ENCODE measurements at regions of chr3 and their contacts with region 1.

Region 1: GRCh38 chr3:108221911-108222852 is at the start of gene IFT57:
- DNase-seq: peak; percentile 86 to 99 (median 94)
- ATAC-seq: peak; percentile 92
- H3K4me3 ChIP-seq: peak within 1 kb of the TSS; percentile 94
- H3K4me3 Mint-ChIP-seq: peak within 1 kb of the TSS; percentile 91
- H3K27ac ChIP-seq: peak within 1 kb of the TSS; percentile 77 to 96
- H3K27ac Mint-ChIP-seq: peak within 1 kb of the TSS; percentile 98
- H3K4me1 ChIP-seq: peaks cover 16% of the 10 kb centered on the region
- H3K4me1 Mint-ChIP-seq: peaks cover 62% of the 10 kb centered on the region
- H3K27me3 ChIP-seq: no peaks in the 10 kb centered on the region
- H3K27me3 Mint-ChIP-seq: no peaks in the 10 kb centered on the region
- CTCF ChIP-seq: no peak
- total RNA-seq, gene IFT57: 56.6 to 58.6 TPM

Region 2: GRCh38 chr3:107927361-107928083 is 294.7 kb before region 1 on chr3:
- CTCF ChIA-PET with region 1: interaction called, 3 read pairs
- POLR2A ChIA-PET with region 1: interaction called, 12 read pairs
- intact Hi-C with region 1: loop called (anchors 10 kb)
- DNase-seq: peak; percentile 37 to 83 (median 56)
- ATAC-seq: peak; percentile 90
- H3K4me3 ChIP-seq: peak overlapping the region; percentile 68
- H3K4me3 Mint-ChIP-seq: peak overlapping the region; percentile 91
- H3K27ac ChIP-seq: no peak overlapping the region
- H3K27ac Mint-ChIP-seq: no peak overlapping the region
- H3K4me1 ChIP-seq: peaks cover 16% of the 10 kb centered on the region
- H3K4me1 Mint-ChIP-seq: peaks cover 14% of the 10 kb centered on the region
- H3K27me3 ChIP-seq: peaks cover 0 to 6% of the 10 kb centered on the region in 2 experiments
- H3K27me3 Mint-ChIP-seq: peaks cover 4% of the 10 kb centered on the region
- CTCF ChIP-seq: peak; percentile 94

Region 3: GRCh38 chr3:108036984-108037741 is 185.0 kb before region 1 on chr3:
- CTCF ChIA-PET with region 1: no interaction called
- POLR2A ChIA-PET with region 1: no interaction called
- intact Hi-C with region 1: no loop called
- DNase-seq: peak in 1 of 14 experiments; percentile 13
- ATAC-seq: no peak
- H3K4me3 ChIP-seq: no peak overlapping the region
- H3K4me3 Mint-ChIP-seq: no peak overlapping the region
- H3K27ac ChIP-seq: no peak overlapping the region
- H3K27ac Mint-ChIP-seq: peak overlapping the region; percentile 72
- H3K4me1 ChIP-seq: no peaks in the 10 kb centered on the region
- H3K4me1 Mint-ChIP-seq: peaks cover 21% of the 10 kb centered on the region
- H3K27me3 ChIP-seq: no peaks in the 10 kb centered on the region
- H3K27me3 Mint-ChIP-seq: no peaks in the 10 kb centered on the region
- CTCF ChIP-seq: no peak

Region 4: DNA sequence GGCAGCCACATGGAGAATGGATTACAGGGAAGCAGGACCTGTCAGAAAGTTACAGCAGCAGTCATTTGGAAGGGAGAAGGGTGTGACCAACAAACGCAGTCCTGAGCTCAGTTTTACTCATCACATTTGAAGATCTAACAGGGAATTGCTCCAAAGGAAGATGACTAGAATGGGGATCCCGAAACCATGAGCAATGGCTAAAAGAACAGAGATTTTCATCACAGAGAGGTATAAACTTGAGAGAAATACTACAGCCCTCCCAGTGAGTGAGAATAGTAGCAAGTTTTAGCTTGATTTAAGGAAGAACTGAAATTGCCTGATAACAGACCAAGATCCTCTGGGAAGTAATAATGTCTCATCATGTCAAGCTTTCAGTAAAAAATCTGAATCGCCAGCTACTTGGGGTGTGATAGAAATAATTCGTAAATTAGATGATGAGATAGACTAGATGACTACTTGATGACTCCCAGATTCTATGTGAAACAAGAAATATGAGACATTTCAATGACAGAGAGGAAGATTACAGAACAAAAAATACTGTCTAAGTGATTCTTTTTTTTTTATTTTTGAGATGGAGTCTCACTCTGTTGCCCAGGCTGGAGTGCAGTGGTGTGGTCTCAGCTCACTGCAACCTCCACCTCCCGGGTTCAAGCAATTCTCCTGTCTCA is 148.3 kb before region 1 on chr3:
- CTCF ChIA-PET with region 1: no interaction called
- POLR2A ChIA-PET with region 1: interaction called, 17 read pairs
- intact Hi-C with region 1: loop called in 1 of 2 experiments (anchors 5 kb)
- DNase-seq: no peak
- ATAC-seq: no peak
- H3K4me3 ChIP-seq: no peak overlapping the region
- H3K4me3 Mint-ChIP-seq: peak overlapping the region; percentile 39
- H3K27ac ChIP-seq: no peak overlapping the region
- H3K27ac Mint-ChIP-seq: peak overlapping the region; percentile 23
- H3K4me1 ChIP-seq: peaks cover 15% of the 10 kb centered on the region
- H3K4me1 Mint-ChIP-seq: peaks cover 93% of the 10 kb centered on the region
- H3K27me3 ChIP-seq: no peaks in the 10 kb centered on the region
- H3K27me3 Mint-ChIP-seq: no peaks in the 10 kb centered on the region
- CTCF ChIP-seq: no peak

Region 5: GRCh38 chr3:108090701-108091451 is 131.3 kb before region 1 on chr3 and contains the start of gene CD47:
- CTCF ChIA-PET with region 1: no interaction called
- POLR2A ChIA-PET with region 1: interaction called, 88 read pairs
- intact Hi-C with region 1: loop called (anchors 1 to 2 kb)
- DNase-seq: peak; percentile 94 to 98 (median 98)
- ATAC-seq: peak; percentile 74
- H3K4me3 ChIP-seq: peak within 1 kb of the TSS; percentile 93
- H3K4me3 Mint-ChIP-seq: peak within 1 kb of the TSS; percentile 100
- H3K27ac ChIP-seq: peak within 1 kb of the TSS; percentile 92 to 98
- H3K27ac Mint-ChIP-seq: no peak within 1 kb of the TSS
- H3K4me1 ChIP-seq: peaks cover 35% of the 10 kb centered on the region
- H3K4me1 Mint-ChIP-seq: peaks cover 38% of the 10 kb centered on the region
- H3K27me3 ChIP-seq: no peaks in the 10 kb centered on the region
- H3K27me3 Mint-ChIP-seq: no peaks in the 10 kb centered on the region
- CTCF ChIP-seq: no peak
- total RNA-seq, gene CD47: 166 to 170 TPM

Region 6: DNA sequence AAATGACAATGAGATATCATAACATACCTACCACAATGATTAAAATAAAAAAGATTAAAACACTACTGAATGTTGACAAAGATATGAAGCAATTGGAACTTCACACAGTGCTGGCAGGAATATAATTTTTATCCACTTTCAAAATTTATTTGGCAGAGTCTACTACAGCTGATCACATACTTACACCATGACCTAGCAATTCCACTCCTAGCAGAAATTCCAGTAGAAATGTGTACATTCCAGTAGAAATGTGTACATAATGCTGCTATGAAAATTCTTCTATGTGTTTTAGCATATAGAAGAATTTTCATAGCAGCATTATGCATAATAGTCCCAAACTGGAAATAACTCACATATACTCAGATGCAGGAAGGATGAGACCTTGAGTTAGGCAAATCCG is 43.5 kb before region 1 on chr3:
- CTCF ChIA-PET with region 1: no interaction called
- POLR2A ChIA-PET with region 1: no interaction called
- intact Hi-C with region 1: loop called in 1 of 2 experiments (anchors 10 kb)
- DNase-seq: no peak
- ATAC-seq: no peak
- H3K4me3 ChIP-seq: no peak overlapping the region
- H3K4me3 Mint-ChIP-seq: no peak overlapping the region
- H3K27ac ChIP-seq: no peak overlapping the region
- H3K27ac Mint-ChIP-seq: no peak overlapping the region
- H3K4me1 ChIP-seq: no peaks in the 10 kb centered on the region
- H3K4me1 Mint-ChIP-seq: peaks cover 48% of the 10 kb centered on the region
- H3K27me3 ChIP-seq: no peaks in the 10 kb centered on the region
- H3K27me3 Mint-ChIP-seq: no peaks in the 10 kb centered on the region
- CTCF ChIP-seq: no peak

Region 7: GRCh38 chr3:108292905-108293328 is 70.7 kb after region 1 on chr3:
- CTCF ChIA-PET with region 1: no interaction called
- POLR2A ChIA-PET with region 1: interaction called, 7 read pairs
- intact Hi-C with region 1: loop called in 1 of 2 experiments (anchors 5 kb)
- DNase-seq: peak in 3 of 14 experiments; percentile 23 to 53 (median 28)
- ATAC-seq: peak; percentile 48
- H3K4me3 ChIP-seq: no peak overlapping the region
- H3K4me3 Mint-ChIP-seq: no peak overlapping the region
- H3K27ac ChIP-seq: peak overlapping the region; percentile 19 to 26
- H3K27ac Mint-ChIP-seq: peak overlapping the region; percentile 50
- H3K4me1 ChIP-seq: peaks cover 14% of the 10 kb centered on the region
- H3K4me1 Mint-ChIP-seq: peaks cover 32% of the 10 kb centered on the region
- H3K27me3 ChIP-seq: no peaks in the 10 kb centered on the region
- H3K27me3 Mint-ChIP-seq: no peaks in the 10 kb centered on the region
- CTCF ChIP-seq: no peak

Region 8: GRCh38 chr3:108471426-108471825 is 249.2 kb after region 1 on chr3:
- CTCF ChIA-PET with region 1: no interaction called
- POLR2A ChIA-PET with region 1: no interaction called
- intact Hi-C with region 1: no loop called
- DNase-seq: no peak
- ATAC-seq: no peak
- H3K4me3 ChIP-seq: no peak overlapping the region
- H3K4me3 Mint-ChIP-seq: no peak overlapping the region
- H3K27ac ChIP-seq: no peak overlapping the region
- H3K27ac Mint-ChIP-seq: no peak overlapping the region
- H3K4me1 ChIP-seq: no peaks in the 10 kb centered on the region
- H3K4me1 Mint-ChIP-seq: no peaks in the 10 kb centered on the region
- H3K27me3 ChIP-seq: no peaks in the 10 kb centered on the region
- H3K27me3 Mint-ChIP-seq: no peaks in the 10 kb centered on the region
- CTCF ChIP-seq: no peak